Psoas muscle (tissue), 8 donors: ENCODE measurements at regions of chr13 and their contacts with region 1.

Region 1: GRCh38 chr13:40352380-40352778 is 314.1 kb downstream of the FOXO1 start:
- DNase-seq: peak; percentile 77 to 91
- ATAC-seq: peak; percentile 31 to 85 (median 81)
- H3K4me3 ChIP-seq: no peak overlapping the region
- H3K27ac ChIP-seq: peak overlapping the region; percentile 67
- H3K4me1 ChIP-seq: peaks cover 36% of the 10 kb centered on the region
- H3K27me3 ChIP-seq: no peaks in the 10 kb centered on the region
- CTCF ChIP-seq: no peak

Region 2: DNA sequence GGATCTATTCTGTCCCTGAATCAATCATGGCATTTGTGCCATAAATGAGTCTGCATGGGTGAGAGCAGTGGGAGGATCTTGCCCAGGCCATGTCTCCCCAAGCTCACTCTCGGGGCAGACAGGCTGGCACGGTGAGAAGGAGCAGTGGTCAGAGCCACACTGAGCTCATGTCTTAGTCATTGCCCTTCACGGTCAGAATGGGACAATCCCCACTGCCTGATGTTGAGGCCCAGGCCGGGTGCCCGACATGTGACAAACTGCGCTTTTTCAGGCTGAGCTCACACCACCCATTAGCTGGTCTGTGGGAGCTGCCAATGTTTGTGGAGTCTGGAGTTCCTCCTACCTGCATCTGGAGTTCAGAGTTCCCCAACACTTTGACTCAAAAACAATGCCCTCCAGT is 215.0 kb before region 1 on chr13:
- intact Hi-C with region 1: no loop called
- DNase-seq: no peak
- ATAC-seq: peak; percentile 41 to 71 (median 60)
- H3K4me3 ChIP-seq: no peak overlapping the region
- H3K27ac ChIP-seq: no peak overlapping the region
- H3K4me1 ChIP-seq: no peaks in the 10 kb centered on the region
- H3K27me3 ChIP-seq: no peaks in the 10 kb centered on the region
- CTCF ChIP-seq: no peak

Region 3: DNA sequence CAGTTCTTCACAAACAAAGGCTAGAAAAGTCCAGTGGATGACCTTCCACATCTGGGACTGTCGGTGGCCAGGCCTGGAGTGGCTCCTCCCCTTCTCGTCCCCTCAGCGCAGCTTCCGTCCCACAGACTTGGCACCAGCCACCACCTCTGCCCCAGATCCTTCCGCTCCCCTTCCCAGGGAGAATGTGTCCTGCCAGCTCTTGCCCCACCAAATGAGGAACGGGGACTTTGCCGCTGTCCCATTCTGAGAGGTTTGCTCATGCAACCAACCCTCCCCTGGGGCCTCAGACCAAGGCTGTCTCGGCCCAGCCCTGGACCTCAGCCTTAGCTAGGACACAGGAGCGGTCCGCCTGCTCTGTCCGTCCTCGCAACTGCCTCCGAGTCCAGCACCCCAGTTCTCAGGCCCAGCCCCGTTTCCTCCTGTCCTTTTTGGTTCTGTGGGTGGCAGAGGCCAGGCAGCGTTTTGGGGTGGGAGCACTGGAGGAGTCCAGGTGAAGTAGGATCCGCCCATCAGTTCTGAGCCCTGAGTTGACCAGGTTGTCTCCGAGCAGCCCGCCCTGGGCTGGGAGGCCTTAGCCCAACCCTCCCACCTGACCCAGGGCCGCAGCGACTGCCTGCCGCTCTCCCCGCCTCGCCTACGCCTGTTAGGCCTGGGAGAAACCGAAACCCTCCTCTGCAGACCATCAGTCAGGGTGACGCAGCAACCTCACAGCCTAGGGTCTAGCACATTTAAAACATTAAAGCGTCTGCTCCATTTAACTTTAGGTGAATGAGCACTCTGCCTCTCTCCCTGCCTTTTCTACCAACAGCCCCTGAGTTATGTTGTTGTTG is 29.8 kb after region 1 on chr13:
- intact Hi-C with region 1: loop called in 1 of 2 experiments (anchors 2 kb)
- DNase-seq: peak in 1 of 2 donors; percentile 77
- ATAC-seq: peak in 2 of 4 donors; percentile 40 to 56
- H3K4me3 ChIP-seq: no peak overlapping the region
- H3K27ac ChIP-seq: no peak overlapping the region
- H3K4me1 ChIP-seq: no peaks in the 10 kb centered on the region
- H3K27me3 ChIP-seq: no peaks in the 10 kb centered on the region
- CTCF ChIP-seq: no peak

Region 4: GRCh38 chr13:40401911-40402776 is 49.8 kb after region 1 on chr13:
- intact Hi-C with region 1: loop called in 1 of 2 experiments (anchors 5 kb)
- DNase-seq: peak; percentile 98
- ATAC-seq: peak; percentile 89 to 95 (median 92)
- H3K4me3 ChIP-seq: peak overlapping the region; percentile 37
- H3K27ac ChIP-seq: peak overlapping the region; percentile 50
- H3K4me1 ChIP-seq: peaks cover 32% of the 10 kb centered on the region
- H3K27me3 ChIP-seq: no peaks in the 10 kb centered on the region
- CTCF ChIP-seq: no peak